Activated B cell treated with CpG ODN at 0.5 μM for 24 hours (primary cell): ENCODE measurements at regions of chr11 and their contacts with region 1.

Region 1: DNA sequence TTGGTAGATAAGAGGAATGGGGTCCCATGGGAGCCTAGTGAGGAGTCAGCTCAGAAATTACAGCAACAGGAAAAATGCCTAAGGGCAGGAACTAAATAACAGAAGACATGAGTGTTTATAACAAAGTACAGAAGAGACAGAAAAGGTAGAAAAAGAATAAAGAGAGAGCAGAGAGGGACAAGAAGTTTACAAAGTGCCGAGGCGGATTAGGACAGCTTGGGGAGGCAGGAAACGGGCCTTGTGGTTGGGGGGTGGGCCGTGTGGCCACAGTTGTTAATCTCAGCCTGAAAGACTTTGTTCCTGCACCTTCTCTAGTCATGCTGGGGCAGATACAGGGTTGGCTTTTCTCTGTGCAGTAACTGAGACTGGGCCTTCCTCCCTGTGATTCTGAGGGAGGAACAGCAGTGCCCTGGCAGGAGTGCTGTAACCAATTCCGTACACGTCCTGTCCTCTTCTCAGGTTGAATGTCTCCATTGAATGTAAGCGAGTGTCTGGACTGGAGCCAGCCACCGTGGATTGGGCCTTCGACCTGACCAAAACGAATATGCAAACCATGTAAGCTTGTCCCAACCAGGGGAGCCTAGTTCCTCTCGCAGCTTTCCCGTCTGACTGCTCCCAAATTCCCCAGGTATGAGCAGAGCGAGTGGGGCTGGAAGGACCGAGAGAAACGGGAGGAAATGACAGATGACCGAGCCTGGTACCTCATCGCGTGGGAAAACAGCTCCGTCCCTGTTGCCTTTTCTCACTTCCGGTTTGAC is 13.2 kb downstream of the NAA40 start:
- DNase-seq: no peak
- ATAC-seq: no peak
- H3K4me3 Mint-ChIP-seq: no peak overlapping the region
- H3K27ac Mint-ChIP-seq: peak overlapping the region; percentile 57
- H3K4me1 Mint-ChIP-seq: peaks cover 11% of the 10 kb centered on the region
- H3K27me3 Mint-ChIP-seq: no peaks in the 10 kb centered on the region
- CTCF ChIP-seq: no peak

Region 2: GRCh38 chr11:63855975-63856749 is 95.8 kb before region 1 on chr11:
- CTCF ChIA-PET with region 1: no interaction called
- POLR2A ChIA-PET with region 1: interaction called, 10 read pairs
- intact Hi-C with region 1: no loop called
- DNase-seq: no peak
- ATAC-seq: no peak
- H3K4me3 Mint-ChIP-seq: no peak overlapping the region
- H3K27ac Mint-ChIP-seq: no peak overlapping the region
- H3K4me1 Mint-ChIP-seq: peaks cover 23% of the 10 kb centered on the region
- H3K27me3 Mint-ChIP-seq: no peaks in the 10 kb centered on the region
- CTCF ChIP-seq: no peak

Region 3: GRCh38 chr11:63986156-63986931 is 34.4 kb after region 1 on chr11 and contains the start of gene OTUB1:
- CTCF ChIA-PET with region 1: no interaction called
- POLR2A ChIA-PET with region 1: no interaction called
- intact Hi-C with region 1: no loop called
- DNase-seq: peak; percentile 80
- ATAC-seq: peak; percentile 86
- H3K4me3 Mint-ChIP-seq: peak within 1 kb of the TSS; percentile 95
- H3K27ac Mint-ChIP-seq: peak within 1 kb of the TSS; percentile 98
- H3K4me1 Mint-ChIP-seq: peaks cover 43% of the 10 kb centered on the region
- H3K27me3 Mint-ChIP-seq: no peaks in the 10 kb centered on the region
- CTCF ChIP-seq: no peak
- total RNA-seq, gene OTUB1: 87.4 and 92.5 TPM in 2 replicates

Region 4: DNA sequence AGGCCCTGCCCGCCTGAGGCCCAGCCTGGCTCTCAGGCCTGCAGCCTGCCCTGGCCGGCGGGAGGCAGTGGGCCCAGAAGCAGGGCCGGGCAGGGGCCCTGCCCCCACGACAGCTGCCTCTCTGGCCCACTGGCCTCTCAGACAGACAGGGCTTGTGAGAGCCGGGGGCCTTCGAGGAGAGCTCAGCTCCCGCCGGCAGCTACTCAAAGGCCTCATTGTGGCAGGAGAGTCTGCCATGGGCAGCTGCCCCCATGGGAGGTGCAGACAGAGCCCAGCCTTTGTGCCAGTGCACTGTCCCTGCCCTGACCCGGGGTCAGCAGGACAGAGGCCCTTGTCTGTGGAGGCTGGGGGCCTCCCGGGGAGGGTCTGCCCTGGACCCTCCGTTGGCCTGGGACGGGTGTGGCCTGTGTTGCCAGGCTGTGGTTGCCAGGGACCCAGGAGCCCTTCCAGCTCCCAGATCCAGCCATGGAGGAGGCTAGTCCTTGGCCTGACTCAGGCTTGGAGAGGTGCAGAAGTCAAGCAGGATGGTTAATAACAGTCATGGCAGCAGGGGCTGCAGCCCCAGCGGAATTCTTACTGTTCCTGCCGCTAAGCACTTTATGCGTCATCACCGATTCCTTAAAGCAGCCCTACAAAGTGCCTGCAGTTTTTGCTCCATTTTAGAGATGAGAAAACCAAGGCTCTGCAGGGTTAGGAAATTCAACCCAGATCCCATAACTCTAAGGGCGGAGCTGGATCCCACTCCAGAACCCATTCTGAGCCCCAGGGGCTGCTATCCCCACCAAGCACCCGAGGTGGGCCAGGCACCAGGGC is 96.3 kb after region 1 on chr11:
- CTCF ChIA-PET with region 1: no interaction called
- POLR2A ChIA-PET with region 1: no interaction called
- intact Hi-C with region 1: no loop called
- DNase-seq: no peak
- ATAC-seq: no peak
- H3K4me3 Mint-ChIP-seq: no peak overlapping the region
- H3K27ac Mint-ChIP-seq: no peak overlapping the region
- H3K4me1 Mint-ChIP-seq: no peaks in the 10 kb centered on the region
- H3K27me3 Mint-ChIP-seq: no peaks in the 10 kb centered on the region
- CTCF ChIP-seq: no peak

Region 5: DNA sequence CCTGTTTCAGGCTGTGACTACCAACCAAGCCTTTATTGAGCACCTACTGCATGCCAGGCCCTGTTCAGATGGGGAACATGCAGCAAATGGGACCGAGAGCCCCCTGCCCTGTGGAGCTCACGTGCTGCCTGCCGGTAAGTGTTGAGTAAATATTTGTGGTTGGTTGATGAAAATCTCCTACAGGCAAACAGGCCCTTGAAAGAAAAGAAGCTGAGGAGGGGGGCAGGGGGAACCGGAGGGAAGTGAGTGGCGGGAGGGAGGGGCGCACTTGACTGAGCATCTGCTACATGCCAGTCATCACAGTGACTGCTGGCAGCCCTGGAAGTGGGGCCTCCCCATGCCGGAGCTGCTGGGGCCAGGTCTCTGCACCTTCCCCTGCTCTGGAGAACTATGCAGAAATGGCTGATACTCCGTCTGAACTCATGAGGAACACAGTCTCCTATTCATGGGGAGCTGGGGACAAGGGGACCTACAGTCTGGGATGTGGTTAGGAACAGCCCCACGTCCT is 179.8 kb after region 1 on chr11:
- CTCF ChIA-PET with region 1: no interaction called
- POLR2A ChIA-PET with region 1: no interaction called
- intact Hi-C with region 1: no loop called
- DNase-seq: no peak
- ATAC-seq: no peak
- H3K4me3 Mint-ChIP-seq: no peak overlapping the region
- H3K27ac Mint-ChIP-seq: no peak overlapping the region
- H3K4me1 Mint-ChIP-seq: no peaks in the 10 kb centered on the region
- H3K27me3 Mint-ChIP-seq: peaks cover 6% of the 10 kb centered on the region
- CTCF ChIP-seq: no peak